ENCODE measurements at regions of chr11 and their contacts with region 1.

Region 1: DNA sequence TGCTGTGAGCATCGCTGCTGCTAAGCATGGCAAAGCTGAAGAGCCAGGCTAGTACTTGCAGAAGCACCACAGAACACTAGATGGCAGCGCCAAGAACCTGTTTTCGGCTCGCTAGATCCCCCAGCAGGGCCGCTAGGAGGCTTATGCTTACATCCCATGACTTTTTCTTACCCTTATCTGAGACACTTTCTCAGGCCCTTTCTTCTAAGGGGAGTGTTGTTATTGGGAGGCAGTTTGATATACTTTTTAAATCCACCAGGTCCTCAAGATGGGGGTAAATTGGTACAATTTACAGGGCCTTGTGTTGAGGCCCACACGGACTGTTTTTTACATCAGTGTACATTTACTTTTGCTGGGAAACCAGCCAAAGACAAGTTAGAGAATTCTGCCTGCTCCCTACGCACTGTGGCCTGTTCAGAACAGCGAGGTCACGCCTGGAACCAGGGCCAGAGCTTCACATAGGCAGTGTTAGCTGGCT is 4.0 kb downstream of the TRIM6 start:
- DNase-seq: peak; percentile 73 to 86
- H3K4me3 ChIP-seq: no peak overlapping the region
- H3K27ac ChIP-seq: peak overlapping the region; percentile 63 to 78
- H3K4me1 ChIP-seq: peaks cover 0 to 26% (median 13%) of the 10 kb centered on the region in 4 donors
- H3K27me3 ChIP-seq: no peaks in the 10 kb centered on the region
- CTCF ChIP-seq: peak; percentile 76 to 84

Region 2: GRCh38 chr11:5684646-5685362 is 84.4 kb after region 1 on chr11 and contains the start of gene TRIM5:
- intact Hi-C with region 1: loop called (anchors 10 kb)
- DNase-seq: peak; percentile 93
- H3K4me3 ChIP-seq: peak within 1 kb of the TSS; percentile 48 to 61
- H3K27ac ChIP-seq: peak within 1 kb of the TSS; percentile 82 to 93
- H3K4me1 ChIP-seq: peaks cover 0 to 35% (median 12%) of the 10 kb centered on the region in 4 donors
- H3K27me3 ChIP-seq: no peaks in the 10 kb centered on the region
- CTCF ChIP-seq: peak; percentile 46 to 58

Region 3: GRCh38 chr11:6022956-6023355 is 422.5 kb after region 1 on chr11:
- intact Hi-C with region 1: no loop called
- DNase-seq: no peak
- H3K4me3 ChIP-seq: no peak overlapping the region
- H3K27ac ChIP-seq: no peak overlapping the region
- H3K4me1 ChIP-seq: no peaks in the 10 kb centered on the region
- H3K27me3 ChIP-seq: no peaks in the 10 kb centered on the region
- CTCF ChIP-seq: peak; percentile 29 to 33